GM12878 (cell line): ENCODE measurements at regions of chr5 and their contacts with region 1.

Region 1: GRCh38 chr5:157516626-157517325 is 56.8 kb downstream of the NIPAL4 start:
- DNase-seq: no peak
- ATAC-seq: no peak
- H3K4me3 ChIP-seq: no peak overlapping the region
- H3K27ac ChIP-seq: no peak overlapping the region
- H3K4me1 ChIP-seq: peaks cover 29% of the 10 kb centered on the region
- H3K27me3 ChIP-seq: no peaks in the 10 kb centered on the region
- CTCF ChIP-seq: no peak
- EP300 ChIP-seq: no peak
- POLR2A ChIP-seq: no peak
- RAD21 ChIP-seq: no peak

Region 2: DNA sequence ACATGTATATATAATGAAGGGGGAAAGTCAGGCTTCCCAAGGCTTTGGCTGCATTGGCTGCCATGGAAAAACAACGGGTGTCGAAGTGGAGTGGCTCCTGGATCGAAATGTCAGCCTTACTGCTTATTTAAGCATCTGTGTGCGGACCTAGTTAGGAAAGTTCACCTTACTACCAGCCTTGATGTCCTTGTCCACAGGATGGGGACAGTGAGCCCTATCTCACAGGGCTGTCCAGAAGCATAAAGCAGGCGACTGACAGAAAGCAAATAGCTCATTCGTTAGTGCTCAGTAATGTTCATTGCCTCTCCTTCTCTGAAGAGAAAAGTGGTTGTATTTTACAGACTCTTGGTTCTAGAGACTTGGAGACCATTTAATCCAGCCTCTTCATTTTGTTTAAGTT is 138.3 kb before region 1 on chr5:
- CTCF ChIA-PET with region 1: no interaction called
- POLR2A ChIA-PET with region 1: no interaction called
- RAD21 ChIA-PET with region 1: no interaction called
- SMC1A ChIA-PET with region 1: no interaction called
- in situ Hi-C with region 1: no loop called
- intact Hi-C with region 1: no loop called
- DNase-seq: no peak
- ATAC-seq: no peak
- H3K4me3 ChIP-seq: no peak overlapping the region
- H3K27ac ChIP-seq: no peak overlapping the region
- H3K4me1 ChIP-seq: no peaks in the 10 kb centered on the region
- H3K27me3 ChIP-seq: no peaks in the 10 kb centered on the region
- CTCF ChIP-seq: no peak
- EP300 ChIP-seq: no peak
- POLR2A ChIP-seq: no peak
- RAD21 ChIP-seq: no peak

Region 3: DNA sequence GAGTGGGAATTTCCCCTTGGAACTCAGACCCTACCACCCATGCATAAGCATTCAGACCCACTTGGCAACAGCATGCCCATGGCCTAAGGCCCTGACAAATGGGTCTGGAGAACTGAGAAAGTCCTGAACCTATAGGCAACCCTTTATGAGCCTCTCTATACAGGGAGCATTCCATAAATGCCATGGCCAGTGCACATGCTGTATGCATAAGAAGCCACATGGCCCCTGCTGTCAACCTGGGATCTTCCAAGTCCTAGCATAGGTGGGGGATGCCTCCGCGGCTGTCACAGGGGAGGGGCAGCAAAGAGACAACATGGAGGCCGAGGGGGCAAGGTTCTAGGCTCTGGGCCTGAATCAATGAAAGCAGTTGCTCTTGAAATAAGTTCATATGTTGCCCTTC is 65.0 kb before region 1 on chr5:
- CTCF ChIA-PET with region 1: no interaction called
- POLR2A ChIA-PET with region 1: no interaction called
- RAD21 ChIA-PET with region 1: no interaction called
- SMC1A ChIA-PET with region 1: no interaction called
- in situ Hi-C with region 1: no loop called
- intact Hi-C with region 1: no loop called
- DNase-seq: no peak
- ATAC-seq: no peak
- H3K4me3 ChIP-seq: no peak overlapping the region
- H3K27ac ChIP-seq: no peak overlapping the region
- H3K4me1 ChIP-seq: no peaks in the 10 kb centered on the region
- H3K27me3 ChIP-seq: no peaks in the 10 kb centered on the region
- CTCF ChIP-seq: no peak
- EP300 ChIP-seq: no peak
- POLR2A ChIP-seq: no peak
- RAD21 ChIP-seq: no peak

Region 4: DNA sequence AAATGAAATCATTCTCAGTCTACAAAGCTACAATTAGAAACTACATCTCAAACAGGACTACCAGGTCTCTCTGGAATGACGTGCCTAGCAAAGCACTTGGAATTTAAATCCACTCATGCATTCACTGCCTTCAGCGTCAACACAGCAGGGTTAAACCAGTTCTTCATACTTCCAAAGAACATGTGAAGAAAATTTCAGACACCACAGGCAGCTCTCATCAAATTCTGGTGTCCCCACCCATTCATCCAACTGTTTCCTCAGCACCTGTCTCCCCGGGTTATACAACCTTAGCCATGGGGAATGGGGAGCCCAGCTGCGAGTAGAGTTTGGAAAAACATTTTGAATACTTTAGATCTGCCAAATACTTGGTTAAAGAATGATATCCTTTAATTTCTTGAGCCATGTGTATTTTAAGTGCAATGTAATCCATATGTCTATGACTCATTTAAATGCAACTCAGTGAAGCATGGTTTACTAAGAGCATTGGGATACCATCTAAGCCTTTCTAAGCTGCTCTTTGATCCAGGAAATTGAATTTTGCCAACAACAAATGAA is 41.3 kb after region 1 on chr5:
- CTCF ChIA-PET with region 1: no interaction called
- POLR2A ChIA-PET with region 1: interaction called, 4 read pairs
- RAD21 ChIA-PET with region 1: interaction called, 12 read pairs
- SMC1A ChIA-PET with region 1: interaction called, 4 read pairs
- in situ Hi-C with region 1: no loop called
- intact Hi-C with region 1: no loop called
- DNase-seq: no peak
- ATAC-seq: no peak
- H3K4me3 ChIP-seq: no peak overlapping the region
- H3K27ac ChIP-seq: no peak overlapping the region
- H3K4me1 ChIP-seq: peaks cover 24% of the 10 kb centered on the region
- H3K27me3 ChIP-seq: no peaks in the 10 kb centered on the region
- CTCF ChIP-seq: no peak
- EP300 ChIP-seq: no peak
- POLR2A ChIP-seq: no peak
- RAD21 ChIP-seq: no peak

Region 5: GRCh38 chr5:157603333-157604190 is 86.8 kb after region 1 on chr5:
- CTCF ChIA-PET with region 1: no interaction called
- POLR2A ChIA-PET with region 1: no interaction called
- RAD21 ChIA-PET with region 1: interaction called, 4 read pairs
- SMC1A ChIA-PET with region 1: interaction called, 9 read pairs
- in situ Hi-C with region 1: no loop called
- intact Hi-C with region 1: loop called (anchors 1 kb)
- DNase-seq: no peak
- ATAC-seq: peak; percentile 62
- H3K4me3 ChIP-seq: no peak overlapping the region; the same call in 1 of the 2 replicates
- H3K27ac ChIP-seq: peak overlapping the region; percentile 49; the same call in 1 of the 2 replicates
- H3K4me1 ChIP-seq: peaks cover 63% of the 10 kb centered on the region
- H3K27me3 ChIP-seq: no peaks in the 10 kb centered on the region
- CTCF ChIP-seq: no peak
- EP300 ChIP-seq: peak; percentile 64 to 82; a peak in 3 of 4 replicates
- POLR2A ChIP-seq: no peak
- RAD21 ChIP-seq: 0 out of 2 replicates have a peak, but pooled peaks have one; percentile 1

Region 6: GRCh38 chr5:157802747-157803146 is 286.0 kb after region 1 on chr5:
- CTCF ChIA-PET with region 1: no interaction called
- POLR2A ChIA-PET with region 1: no interaction called
- RAD21 ChIA-PET with region 1: no interaction called
- SMC1A ChIA-PET with region 1: no interaction called
- in situ Hi-C with region 1: no loop called
- intact Hi-C with region 1: no loop called
- DNase-seq: no peak
- ATAC-seq: no peak
- H3K4me3 ChIP-seq: no peak overlapping the region
- H3K27ac ChIP-seq: no peak overlapping the region
- H3K4me1 ChIP-seq: no peaks in the 10 kb centered on the region
- H3K27me3 ChIP-seq: no peaks in the 10 kb centered on the region
- CTCF ChIP-seq: no peak
- EP300 ChIP-seq: no peak
- POLR2A ChIP-seq: no peak
- RAD21 ChIP-seq: no peak